Breast epithelium (tissue), 4 donors: ENCODE measurements at regions of chr6 and their contacts with region 1.

Region 1: DNA sequence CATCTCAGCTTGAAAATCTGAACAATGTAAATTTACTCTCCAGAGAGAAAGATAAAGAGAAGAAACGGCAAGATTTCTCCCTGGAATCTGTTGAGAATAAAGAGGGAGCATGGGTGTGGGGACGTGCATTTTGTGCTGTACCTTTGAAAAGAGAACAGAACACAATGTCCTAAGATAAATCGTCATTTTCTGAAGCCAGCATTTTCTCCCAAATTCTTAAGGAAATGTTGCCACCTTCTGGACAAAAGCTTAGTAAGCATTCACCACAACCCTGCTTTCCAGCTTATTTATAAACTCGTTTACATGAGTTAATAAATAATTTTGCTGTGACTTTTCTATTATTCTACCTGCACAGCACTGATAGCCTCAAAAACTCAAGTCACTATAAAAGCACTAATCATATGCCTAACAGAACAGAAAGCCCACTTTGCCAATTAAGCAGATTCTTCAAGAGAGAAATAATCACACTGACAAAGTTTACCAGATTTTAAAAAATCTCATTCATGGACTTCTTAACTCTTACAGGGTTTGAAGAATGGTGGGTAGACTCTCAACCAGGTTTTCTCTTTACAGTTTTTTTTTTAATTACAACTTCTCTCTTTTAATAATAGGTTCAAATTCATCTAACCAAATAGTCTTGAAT is 155.8 kb downstream of the MBOAT1 start:
- DNase-seq: no peak
- H3K4me3 ChIP-seq: no peak overlapping the region
- H3K27ac ChIP-seq: no peak overlapping the region
- H3K4me1 ChIP-seq: no peaks in the 10 kb centered on the region
- H3K27me3 ChIP-seq: no peaks in the 10 kb centered on the region
- CTCF ChIP-seq: peak; percentile 43 to 71 (median 48)
- POLR2A ChIP-seq: no peak

Region 2: GRCh38 chr6:18752278-18753068 is 1304.0 kb before region 1 on chr6:
- intact Hi-C with region 1: loop called (anchors 5 kb)
- DNase-seq: no peak
- H3K4me3 ChIP-seq: peak overlapping the region in 2 of 3 donors; percentile 8 to 33
- H3K27ac ChIP-seq: peak overlapping the region; percentile 26 to 53
- H3K4me1 ChIP-seq: no peaks in the 10 kb centered on the region
- H3K27me3 ChIP-seq: no peaks in the 10 kb centered on the region
- CTCF ChIP-seq: no peak
- POLR2A ChIP-seq: no peak

Region 3: DNA sequence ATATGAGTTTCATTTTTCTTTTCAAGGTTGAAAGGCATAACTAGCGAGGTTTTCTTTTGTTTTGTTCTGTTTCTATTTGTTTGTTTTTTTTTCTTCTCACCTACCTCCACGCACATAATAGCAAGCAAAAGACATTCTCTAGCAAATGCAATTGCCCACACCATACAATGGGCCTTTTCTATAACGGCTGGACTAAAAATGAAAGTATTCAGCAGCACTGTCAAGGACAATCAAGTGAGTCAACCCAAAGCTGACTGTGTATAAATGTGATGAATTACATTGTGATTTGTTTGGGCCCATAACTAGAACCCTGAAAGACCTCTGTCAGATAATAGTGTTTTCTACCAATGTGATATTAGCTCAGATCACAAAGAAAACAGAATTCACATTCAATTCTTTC is 1172.6 kb before region 1 on chr6:
- intact Hi-C with region 1: loop called (anchors 5 kb)
- DNase-seq: no peak
- H3K4me3 ChIP-seq: no peak overlapping the region
- H3K27ac ChIP-seq: no peak overlapping the region
- H3K4me1 ChIP-seq: no peaks in the 10 kb centered on the region
- H3K27me3 ChIP-seq: no peaks in the 10 kb centered on the region
- CTCF ChIP-seq: no peak
- POLR2A ChIP-seq: no peak

Region 4: GRCh38 chr6:20236909-20237600 is 180.6 kb after region 1 on chr6:
- intact Hi-C with region 1: no loop called
- DNase-seq: no peak
- H3K4me3 ChIP-seq: no peak overlapping the region
- H3K27ac ChIP-seq: no peak overlapping the region
- H3K4me1 ChIP-seq: no peaks in the 10 kb centered on the region
- H3K27me3 ChIP-seq: no peaks in the 10 kb centered on the region
- CTCF ChIP-seq: no peak
- POLR2A ChIP-seq: no peak